ENCODE measurements at regions of chr15 and their contacts with region 1.

Region 1: DNA sequence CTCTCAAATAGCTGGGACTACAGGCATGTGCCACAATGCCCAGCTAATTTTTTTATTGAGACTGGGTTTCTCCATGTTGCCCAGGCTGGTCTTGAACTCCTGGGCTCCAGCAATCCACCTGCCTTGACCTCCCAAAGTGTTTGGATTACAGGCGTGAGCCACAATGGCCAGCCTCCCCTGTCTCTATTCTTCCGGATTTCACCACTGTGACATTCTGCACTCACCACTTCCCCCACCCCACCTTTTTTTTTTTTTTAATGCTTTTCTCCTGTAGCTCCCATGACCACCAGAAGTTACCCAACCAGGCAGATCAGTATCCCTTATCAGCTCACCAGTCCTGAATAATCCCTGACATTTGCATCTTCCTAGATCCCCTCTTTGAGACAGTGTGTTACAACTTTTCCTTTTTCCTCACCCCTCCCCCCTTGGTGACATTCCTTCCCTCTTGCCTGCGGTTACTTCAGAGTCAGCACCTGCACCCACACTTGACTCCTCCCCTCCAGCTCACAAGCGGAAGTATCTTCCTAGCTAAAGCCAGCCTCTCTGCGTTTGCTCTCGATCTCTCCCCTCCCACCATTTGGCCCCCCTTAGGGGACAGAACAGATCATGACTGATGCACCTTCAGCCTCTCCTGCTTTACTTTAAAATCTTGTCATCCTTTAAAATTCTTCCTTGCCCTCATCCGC is 13.5 kb upstream of the ZNF592 start:
- DNase-seq: peak; percentile 88
- ATAC-seq: peak; percentile 79
- H3K4me3 Mint-ChIP-seq: peak overlapping the region; percentile 61
- H3K27ac Mint-ChIP-seq: peak overlapping the region; percentile 93
- H3K4me1 Mint-ChIP-seq: peaks cover 55% of the 10 kb centered on the region
- H3K27me3 Mint-ChIP-seq: no peaks in the 10 kb centered on the region
- CTCF ChIP-seq: no peak

Region 2: GRCh38 chr15:84748274-84749110 is 13.6 kb after region 1 on chr15 and contains the start of gene ZNF592:
- CTCF ChIA-PET with region 1: interaction called, 19 read pairs
- POLR2A ChIA-PET with region 1: interaction called, 42 read pairs
- intact Hi-C with region 1: no loop called
- DNase-seq: peak; percentile 73
- ATAC-seq: peak; percentile 47
- H3K4me3 Mint-ChIP-seq: peak within 1 kb of the TSS; percentile 95
- H3K27ac Mint-ChIP-seq: peak within 1 kb of the TSS; percentile 97
- H3K4me1 Mint-ChIP-seq: peaks cover 54% of the 10 kb centered on the region
- H3K27me3 Mint-ChIP-seq: no peaks in the 10 kb centered on the region
- CTCF ChIP-seq: no peak
- total RNA-seq, gene ZNF592: 18.1 to 18.3 TPM

Region 3: DNA sequence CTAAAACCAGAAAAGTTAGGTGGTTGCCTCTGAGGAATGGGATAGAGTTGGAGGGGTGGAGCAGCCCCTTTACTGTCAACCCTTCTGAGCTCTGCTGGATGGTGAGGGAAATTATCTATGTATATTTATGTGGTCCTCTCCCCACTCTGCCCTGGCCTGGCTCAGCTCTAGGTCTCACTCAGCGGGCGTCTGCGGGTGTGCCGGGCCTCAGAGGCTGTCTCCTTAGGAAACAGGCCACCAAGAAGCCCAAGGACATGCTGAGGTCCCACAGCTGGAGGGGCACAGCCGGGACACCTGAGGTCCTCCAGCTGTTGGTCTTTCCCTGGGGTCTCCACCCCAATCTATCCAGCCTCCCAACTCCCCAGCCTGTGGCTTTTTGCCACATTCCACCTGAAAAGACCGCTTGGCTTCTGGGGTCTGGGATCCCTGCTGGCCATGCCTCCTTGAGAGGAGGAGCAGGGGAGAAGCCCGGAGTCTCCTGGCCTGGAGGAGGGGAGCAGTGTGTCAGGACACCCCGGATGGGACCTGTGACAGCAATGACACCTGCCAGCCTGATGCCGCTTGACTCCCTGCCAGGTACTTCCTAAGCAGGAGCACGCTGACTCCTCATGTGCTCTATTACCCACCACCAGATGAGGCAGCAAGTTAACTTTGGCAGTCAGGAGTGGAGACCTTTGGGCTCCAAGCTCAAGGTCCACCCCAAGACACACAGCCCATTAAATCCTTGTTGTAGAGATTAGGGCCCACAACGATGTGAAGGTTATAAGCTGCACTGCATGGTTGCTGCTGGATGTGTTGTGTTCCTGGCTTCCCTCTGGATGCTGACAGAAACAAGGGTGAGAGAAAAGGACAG is 149.2 kb after region 1 on chr15 and contains the start of gene SLC28A1:
- CTCF ChIA-PET with region 1: no interaction called
- POLR2A ChIA-PET with region 1: no interaction called
- intact Hi-C with region 1: no loop called
- DNase-seq: no peak
- ATAC-seq: no peak
- H3K4me3 Mint-ChIP-seq: no peak within 1 kb of the TSS
- H3K27ac Mint-ChIP-seq: no peak within 1 kb of the TSS
- H3K4me1 Mint-ChIP-seq: peaks cover 2% of the 10 kb centered on the region
- H3K27me3 Mint-ChIP-seq: no peaks in the 10 kb centered on the region
- CTCF ChIP-seq: no peak
- total RNA-seq, gene SLC28A1: not detected

Measured in activated CD8-positive, alpha-beta T cell treated with anti-CD3 and anti-CD28 coated beads for 36 hours (primary cell).